HepG2 (cell line): ENCODE measurements at regions of chr10 and their contacts with region 1.

Region 1: GRCh38 chr10:44925224-44925623 is 14.1 kb downstream of the TMEM72 start:
- DNase-seq: peak; percentile 60
- ATAC-seq: peak; percentile 68
- H3K4me3 ChIP-seq: no peak overlapping the region
- H3K27ac ChIP-seq: no peak overlapping the region
- H3K4me1 ChIP-seq: peaks cover 38% of the 10 kb centered on the region
- H3K27me3 ChIP-seq: peaks cover 3 to 5% of the 10 kb centered on the region in 2 experiments; a peak in 2 of 5 replicates
- CTCF ChIP-seq: peak; percentile 86
- EP300 ChIP-seq: no peak
- POLR2A ChIP-seq: no peak
- RAD21 ChIP-seq: peak; percentile 42; the same call in 1 of the 2 replicates

Region 2: DNA sequence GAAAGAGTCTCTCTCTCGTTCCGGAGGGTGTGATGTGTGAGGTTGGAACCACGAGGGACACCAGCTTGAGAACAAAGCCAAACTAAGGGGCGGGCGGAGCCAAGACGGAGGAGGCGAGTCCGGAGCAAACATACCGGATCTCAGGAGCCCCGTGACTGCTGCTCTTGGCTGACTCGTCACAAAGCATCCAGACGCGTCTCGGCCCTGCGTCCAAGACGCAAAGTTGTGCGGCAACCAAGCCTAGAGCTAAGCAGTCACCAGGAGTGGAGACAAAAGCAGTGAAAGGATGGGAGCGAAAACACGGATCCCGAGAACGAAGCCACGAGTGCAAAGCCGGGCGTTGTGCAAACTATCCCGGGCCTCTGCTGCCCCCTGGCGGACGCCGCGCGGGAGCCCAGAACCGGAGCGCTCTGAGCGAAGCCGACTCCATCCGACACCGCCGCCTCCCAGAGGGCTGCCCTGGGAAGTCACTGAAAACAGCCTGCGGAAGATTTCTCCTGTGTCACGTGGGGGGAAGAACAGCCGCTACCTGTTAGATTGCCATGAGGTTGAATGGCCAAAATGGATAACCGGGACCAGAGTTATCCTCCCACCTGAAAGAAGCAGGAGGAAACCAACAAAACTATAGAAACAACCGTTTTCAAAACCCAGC is 60.5 kb before region 1 on chr10:
- CTCF ChIA-PET with region 1: interaction called, 4 read pairs
- POLR2A ChIA-PET with region 1: no interaction called
- in situ Hi-C with region 1: no loop called
- intact Hi-C with region 1: loop called (anchors 2 kb)
- DNase-seq: peak; percentile 57
- ATAC-seq: peak; percentile 99
- H3K4me3 ChIP-seq: peak overlapping the region in 1 of 3 experiments; percentile 65; a peak in 2 of 6 replicates
- H3K27ac ChIP-seq: no peak overlapping the region
- H3K4me1 ChIP-seq: peaks cover 11% of the 10 kb centered on the region
- H3K27me3 ChIP-seq: peaks cover 1 to 27% of the 10 kb centered on the region in 2 experiments; a peak in 3 of 5 replicates
- CTCF ChIP-seq: peak; percentile 93
- EP300 ChIP-seq: no peak
- POLR2A ChIP-seq: no peak
- RAD21 ChIP-seq: peak; percentile 87

Region 3: DNA sequence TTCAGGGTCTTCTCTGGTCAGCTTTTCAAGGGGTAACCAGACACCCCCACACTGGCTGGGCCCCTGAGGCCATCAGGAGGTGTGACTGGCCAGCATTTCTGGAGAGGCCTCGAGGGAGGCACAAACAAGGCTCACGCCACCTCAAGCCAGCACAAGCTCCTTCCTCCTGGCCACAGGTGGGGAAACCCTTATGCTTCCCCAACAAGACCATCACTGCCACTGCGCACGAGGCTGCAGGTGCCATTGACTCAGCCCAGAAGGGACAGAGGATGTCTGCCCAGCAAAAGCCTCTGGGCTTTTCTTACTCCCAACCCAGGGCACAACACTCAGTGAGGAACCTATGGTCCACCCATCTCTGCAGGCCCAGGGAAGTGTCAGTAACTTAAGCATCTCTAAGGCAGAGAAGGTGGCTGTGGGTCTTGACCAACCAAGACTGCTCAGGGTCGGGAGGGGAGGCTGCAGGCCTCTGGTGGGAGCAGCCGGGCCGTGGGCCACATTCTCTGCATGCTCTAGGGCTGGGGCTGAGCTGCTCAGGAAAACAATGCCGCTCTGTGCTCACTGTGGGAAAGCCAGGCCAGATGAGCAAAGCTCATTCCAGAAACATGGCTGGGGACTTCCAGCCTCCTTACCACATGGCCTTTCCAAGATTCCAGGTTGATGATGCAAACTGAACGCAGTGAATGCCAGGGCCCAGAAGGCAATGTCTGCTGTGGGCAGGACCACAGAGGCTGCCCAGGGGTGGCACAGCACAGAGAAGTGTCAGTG is 10.2 kb after region 1 on chr10:
- CTCF ChIA-PET with region 1: no interaction called
- POLR2A ChIA-PET with region 1: no interaction called
- in situ Hi-C with region 1: no loop called
- intact Hi-C with region 1: no loop called
- DNase-seq: peak; percentile 94
- ATAC-seq: peak; percentile 84
- H3K4me3 ChIP-seq: peak overlapping the region in 1 of 3 experiments; percentile 4; a peak in 1 of 6 replicates
- H3K27ac ChIP-seq: peak overlapping the region; percentile 51
- H3K4me1 ChIP-seq: peaks cover 88% of the 10 kb centered on the region
- H3K27me3 ChIP-seq: no peaks in the 10 kb centered on the region
- CTCF ChIP-seq: peak; percentile 50
- EP300 ChIP-seq: peak in 1 of 2 experiments; percentile 61; a peak in 1 of 4 replicates
- POLR2A ChIP-seq: no peak; a peak in 1 of 4 replicates
- RAD21 ChIP-seq: no peak; the same call in 1 of the 2 replicates

Region 4: GRCh38 chr10:44955413-44956070 is 30.3 kb after region 1 on chr10:
- CTCF ChIA-PET with region 1: no interaction called
- POLR2A ChIA-PET with region 1: no interaction called
- in situ Hi-C with region 1: no loop called
- intact Hi-C with region 1: no loop called
- DNase-seq: no peak
- ATAC-seq: no peak
- H3K4me3 ChIP-seq: no peak overlapping the region
- H3K27ac ChIP-seq: no peak overlapping the region
- H3K4me1 ChIP-seq: peaks cover 66% of the 10 kb centered on the region
- H3K27me3 ChIP-seq: no peaks in the 10 kb centered on the region; a peak in 1 of 5 replicates
- CTCF ChIP-seq: no peak
- EP300 ChIP-seq: no peak
- POLR2A ChIP-seq: no peak
- RAD21 ChIP-seq: no peak